HepG2 (cell line): ENCODE measurements at regions of chr10 and their contacts with region 1.

Region 1: GRCh38 chr10:83871187-83872081 is 267.9 kb upstream of the GHITM start:
- DNase-seq: peak; percentile 64
- ATAC-seq: peak; percentile 99
- H3K4me3 ChIP-seq: no peak overlapping the region
- H3K27ac ChIP-seq: no peak overlapping the region
- H3K4me1 ChIP-seq: no peaks in the 10 kb centered on the region
- H3K27me3 ChIP-seq: no peaks in the 10 kb centered on the region
- CTCF ChIP-seq: peak; percentile 96
- EP300 ChIP-seq: no peak
- POLR2A ChIP-seq: no peak
- RAD21 ChIP-seq: peak; percentile 81

Region 2: DNA sequence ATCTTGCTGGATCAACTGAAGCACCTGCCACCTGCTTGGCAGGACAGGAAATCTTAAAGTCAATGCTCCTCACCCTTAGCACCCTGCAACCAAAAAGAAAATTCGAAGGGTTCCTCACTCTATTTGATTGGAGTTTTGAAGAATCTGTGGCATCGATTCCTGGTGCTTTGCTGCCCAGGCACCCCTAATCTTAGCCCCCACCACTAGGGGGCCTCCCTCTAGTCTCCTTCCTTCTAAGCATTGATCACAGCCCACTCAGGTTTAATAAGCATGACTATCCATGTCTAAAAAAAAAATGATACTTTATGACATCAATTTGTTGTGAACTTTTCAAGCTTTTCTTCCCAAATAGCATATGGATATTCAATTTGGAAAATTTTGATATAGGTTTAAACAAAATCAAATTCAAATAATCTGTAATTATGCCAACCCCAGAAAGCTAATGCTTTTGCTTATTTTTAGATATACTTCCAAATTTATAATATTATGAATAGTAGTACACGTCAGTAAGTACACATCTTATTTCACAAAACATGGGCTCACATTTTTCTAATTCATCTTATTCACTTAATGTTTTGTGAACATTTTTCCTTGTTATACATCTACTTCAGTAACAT is 1951.1 kb before region 1 on chr10:
- CTCF ChIA-PET with region 1: no interaction called
- POLR2A ChIA-PET with region 1: no interaction called
- in situ Hi-C with region 1: no loop called
- intact Hi-C with region 1: loop called (anchors 5 kb)
- DNase-seq: no peak
- ATAC-seq: no peak
- H3K4me3 ChIP-seq: no peak overlapping the region
- H3K27ac ChIP-seq: no peak overlapping the region
- H3K4me1 ChIP-seq: no peaks in the 10 kb centered on the region
- H3K27me3 ChIP-seq: no peaks in the 10 kb centered on the region
- CTCF ChIP-seq: no peak
- EP300 ChIP-seq: no peak
- POLR2A ChIP-seq: no peak
- RAD21 ChIP-seq: no peak

Region 3: GRCh38 chr10:82811621-82812020 is 1059.8 kb before region 1 on chr10:
- CTCF ChIA-PET with region 1: no interaction called
- POLR2A ChIA-PET with region 1: no interaction called
- in situ Hi-C with region 1: loop called (anchors 25 kb)
- intact Hi-C with region 1: loop called (anchors 5 kb)
- DNase-seq: no peak
- ATAC-seq: no peak
- H3K4me3 ChIP-seq: no peak overlapping the region
- H3K27ac ChIP-seq: no peak overlapping the region
- H3K4me1 ChIP-seq: no peaks in the 10 kb centered on the region
- H3K27me3 ChIP-seq: no peaks in the 10 kb centered on the region
- CTCF ChIP-seq: no peak
- EP300 ChIP-seq: no peak
- POLR2A ChIP-seq: no peak
- RAD21 ChIP-seq: no peak

Region 4: DNA sequence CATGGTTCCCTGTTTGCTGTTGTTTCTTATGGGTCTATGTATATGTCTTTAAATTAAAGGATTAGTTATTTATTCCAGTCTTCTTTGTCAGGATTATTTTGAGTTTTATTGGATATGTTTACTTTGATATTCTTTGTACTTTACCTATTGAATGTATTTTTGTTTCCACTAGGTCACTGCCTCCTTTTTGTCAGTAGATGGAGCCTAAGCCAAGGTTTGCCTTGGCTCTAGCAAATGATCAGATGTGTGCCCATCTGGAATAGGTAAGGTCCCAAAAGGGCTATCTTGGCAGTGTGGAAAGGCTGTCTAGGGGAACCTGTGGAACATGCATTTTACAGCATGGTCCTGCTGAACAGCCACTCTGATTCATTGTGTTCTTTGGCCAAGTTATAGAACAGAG is 69.5 kb before region 1 on chr10:
- CTCF ChIA-PET with region 1: no interaction called
- POLR2A ChIA-PET with region 1: no interaction called
- in situ Hi-C with region 1: no loop called
- intact Hi-C with region 1: loop called (anchors 5 kb)
- DNase-seq: no peak
- ATAC-seq: no peak
- H3K4me3 ChIP-seq: no peak overlapping the region
- H3K27ac ChIP-seq: no peak overlapping the region
- H3K4me1 ChIP-seq: no peaks in the 10 kb centered on the region
- H3K27me3 ChIP-seq: no peaks in the 10 kb centered on the region
- CTCF ChIP-seq: no peak
- EP300 ChIP-seq: no peak
- POLR2A ChIP-seq: no peak
- RAD21 ChIP-seq: no peak